A673 (cell line): ENCODE measurements at regions of chr19 and their contacts with region 1.

Region 1: DNA sequence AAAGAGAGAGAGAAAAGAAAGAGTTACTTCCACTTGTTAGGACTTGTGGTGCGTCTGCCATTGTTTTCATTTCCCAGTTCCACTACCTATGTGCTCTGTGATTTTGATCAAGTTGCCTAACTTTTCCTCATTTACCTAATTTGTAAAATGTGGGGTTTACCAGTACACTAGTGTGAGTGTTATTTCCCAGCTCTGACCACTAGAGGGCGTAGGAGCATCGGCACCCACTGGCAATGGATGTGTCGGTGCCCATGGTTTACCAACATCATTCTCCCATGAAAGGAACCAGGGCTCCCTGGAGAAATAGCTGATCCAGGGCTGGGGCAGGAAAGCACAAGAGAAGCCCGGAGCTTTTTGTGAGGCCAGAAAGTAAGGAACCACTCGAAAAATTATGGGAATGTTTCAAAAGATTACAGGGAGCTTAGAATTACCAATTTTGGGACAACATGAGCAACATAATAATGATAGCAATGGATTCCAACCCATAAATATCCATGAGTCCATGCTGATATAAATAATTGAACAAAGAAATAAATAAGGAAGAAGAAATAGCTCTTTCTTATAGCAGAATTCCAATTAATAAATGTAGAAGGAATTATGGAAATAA is 15.1 kb upstream of the CEACAM4 start:
- DNase-seq: peak; percentile 84
- H3K4me3 ChIP-seq: no peak overlapping the region
- H3K27ac ChIP-seq: no peak overlapping the region
- H3K4me1 ChIP-seq: no peaks in the 10 kb centered on the region
- H3K27me3 ChIP-seq: no peaks in the 10 kb centered on the region
- CTCF ChIP-seq: peak; percentile 95

Region 2: GRCh38 chr19:41691268-41691970 is 49.4 kb after region 1 on chr19:
- CTCF ChIA-PET with region 1: interaction called, 16 read pairs
- POLR2A ChIA-PET with region 1: no interaction called
- intact Hi-C with region 1: no loop called
- DNase-seq: peak; percentile 53
- H3K4me3 ChIP-seq: no peak overlapping the region
- H3K27ac ChIP-seq: no peak overlapping the region
- H3K4me1 ChIP-seq: no peaks in the 10 kb centered on the region
- H3K27me3 ChIP-seq: no peaks in the 10 kb centered on the region
- CTCF ChIP-seq: peak; percentile 83

Region 3: DNA sequence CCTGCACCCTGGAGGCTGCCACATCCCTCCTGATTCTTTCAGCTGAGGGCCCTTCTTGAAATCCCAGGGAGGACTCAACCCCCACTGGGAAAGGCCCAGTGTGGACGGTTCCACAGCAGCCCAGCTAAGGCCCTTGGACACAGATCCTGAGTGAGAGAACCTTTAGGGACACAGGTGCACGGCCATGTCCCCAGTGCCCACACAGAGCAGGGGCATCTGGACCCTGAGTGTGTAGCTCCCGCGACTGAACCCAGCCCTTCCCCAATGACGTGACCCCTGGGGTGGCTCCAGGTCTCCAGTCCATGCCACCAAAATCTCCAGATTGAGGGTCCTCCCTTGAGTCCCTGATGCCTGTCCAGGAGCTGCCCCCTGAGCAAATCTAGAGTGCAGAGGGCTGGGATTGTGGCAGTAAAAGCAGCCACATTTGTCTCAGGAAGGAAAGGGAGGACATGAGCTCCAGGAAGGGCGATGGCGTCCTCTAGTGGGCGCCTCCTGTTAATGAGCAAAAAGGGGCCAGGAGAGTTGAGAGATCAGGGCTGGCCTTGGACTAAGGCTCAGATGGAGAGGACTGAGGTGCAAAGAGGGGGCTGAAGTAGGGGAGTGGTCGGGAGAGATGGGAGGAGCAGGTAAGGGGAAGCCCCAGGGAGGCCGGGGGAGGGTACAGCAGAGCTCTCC is 59.6 kb after region 1 on chr19:
- CTCF ChIA-PET with region 1: interaction called, 12 read pairs
- POLR2A ChIA-PET with region 1: no interaction called
- intact Hi-C with region 1: loop called (anchors 5 kb)
- DNase-seq: peak; percentile 85
- H3K4me3 ChIP-seq: no peak overlapping the region
- H3K27ac ChIP-seq: peak overlapping the region; percentile 90
- H3K4me1 ChIP-seq: peaks cover 33% of the 10 kb centered on the region
- H3K27me3 ChIP-seq: no peaks in the 10 kb centered on the region
- CTCF ChIP-seq: peak; percentile 91

Region 4: DNA sequence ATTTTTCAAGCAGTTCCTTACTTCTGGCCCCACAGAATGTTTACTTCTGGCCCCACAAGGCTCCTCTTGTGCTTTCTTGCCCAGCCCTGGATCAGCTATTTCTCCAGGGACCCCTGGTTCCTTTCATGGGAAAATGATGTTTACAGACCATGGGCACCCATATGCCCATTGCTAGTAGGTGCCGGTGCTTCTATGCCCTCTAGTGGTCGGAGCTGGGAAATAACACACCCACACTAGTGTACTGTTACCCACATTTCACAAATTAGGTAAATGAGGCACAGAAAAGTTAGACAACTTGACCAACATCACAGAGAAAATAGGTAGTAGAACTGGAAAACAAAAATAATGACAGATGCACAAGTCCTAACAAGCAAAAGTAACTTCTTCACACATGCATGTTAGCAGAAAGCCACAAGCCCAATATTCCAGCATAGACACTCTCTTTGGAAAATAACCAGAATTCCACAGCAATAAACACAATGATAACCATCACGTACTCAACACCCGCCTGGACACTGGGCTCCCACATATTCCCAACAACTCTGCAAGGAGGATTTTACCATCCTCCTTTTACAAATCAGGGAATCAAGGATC is 112.1 kb after region 1 on chr19:
- CTCF ChIA-PET with region 1: interaction called, 11 read pairs
- POLR2A ChIA-PET with region 1: no interaction called
- intact Hi-C with region 1: loop called (anchors 5 kb)
- DNase-seq: peak; percentile 85
- H3K4me3 ChIP-seq: no peak overlapping the region
- H3K27ac ChIP-seq: peak overlapping the region; percentile 68
- H3K4me1 ChIP-seq: peaks cover 19% of the 10 kb centered on the region
- H3K27me3 ChIP-seq: no peaks in the 10 kb centered on the region
- CTCF ChIP-seq: peak; percentile 87

Region 5: DNA sequence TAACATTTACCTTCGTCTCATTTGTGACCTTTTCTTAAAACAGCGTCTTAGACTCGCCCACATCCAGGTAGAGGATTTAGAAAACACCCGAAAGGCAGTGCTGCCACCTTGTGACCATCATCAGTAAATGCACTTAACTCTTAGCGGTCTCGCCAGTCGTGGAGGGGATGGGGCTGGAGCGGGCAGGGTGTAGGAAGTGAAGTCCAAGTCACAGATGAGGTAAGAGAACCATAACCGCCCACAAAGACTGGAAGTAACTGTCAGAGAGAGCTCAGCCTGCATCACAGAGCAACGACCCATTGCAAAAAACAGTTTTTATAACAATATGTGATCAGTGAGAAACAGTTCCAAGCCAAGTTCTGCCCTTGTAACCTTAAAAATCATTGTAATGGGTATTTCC is 143.7 kb after region 1 on chr19:
- CTCF ChIA-PET with region 1: interaction called, 3 read pairs
- POLR2A ChIA-PET with region 1: no interaction called
- intact Hi-C with region 1: loop called (anchors 5 kb)
- DNase-seq: peak; percentile 88
- H3K4me3 ChIP-seq: no peak overlapping the region
- H3K27ac ChIP-seq: no peak overlapping the region
- H3K4me1 ChIP-seq: peaks cover 11% of the 10 kb centered on the region
- H3K27me3 ChIP-seq: no peaks in the 10 kb centered on the region
- CTCF ChIP-seq: peak; percentile 92